ENCODE measurements at regions of chr12 and their contacts with region 1.

Region 1: DNA sequence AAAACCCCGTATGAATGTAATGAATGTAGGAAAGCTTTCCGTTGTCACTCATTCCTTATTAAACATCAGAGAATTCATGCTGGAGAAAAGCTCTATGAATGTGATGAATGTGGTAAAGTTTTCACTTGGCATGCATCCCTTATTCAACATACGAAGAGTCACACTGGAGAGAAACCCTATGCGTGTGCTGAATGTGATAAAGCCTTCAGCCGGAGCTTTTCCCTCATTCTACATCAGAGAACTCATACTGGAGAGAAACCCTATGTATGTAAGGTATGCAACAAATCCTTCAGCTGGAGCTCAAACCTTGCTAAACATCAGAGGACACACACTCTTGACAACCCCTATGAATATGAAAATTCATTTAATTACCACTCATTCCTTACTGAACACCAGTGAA is 23.8 kb downstream of the ZNF891 start:
- DNase-seq: no peak
- ATAC-seq: no peak
- H3K4me3 ChIP-seq: no peak overlapping the region
- H3K27ac ChIP-seq: no peak overlapping the region
- H3K4me1 ChIP-seq: no peaks in the 10 kb centered on the region
- H3K27me3 ChIP-seq: no peaks in the 10 kb centered on the region
- CTCF ChIP-seq: no peak

Region 2: GRCh38 chr12:132776816-132777568 is 329.3 kb before region 1 on chr12:
- intact Hi-C with region 1: no loop called
- DNase-seq: peak; percentile 82
- ATAC-seq: peak; percentile 76 to 94 (median 83)
- H3K4me3 ChIP-seq: no peak overlapping the region
- H3K27ac ChIP-seq: peak overlapping the region in 3 of 10 donors; percentile 4 to 27 (median 26)
- H3K4me1 ChIP-seq: peaks cover 0 to 19% (median 8%) of the 10 kb centered on the region in 9 donors
- H3K27me3 ChIP-seq: no peaks in the 10 kb centered on the region
- CTCF ChIP-seq: no peak

Region 3: GRCh38 chr12:133010657-133011297 is 95.5 kb before region 1 on chr12:
- intact Hi-C with region 1: no loop called
- DNase-seq: no peak
- ATAC-seq: no peak
- H3K4me3 ChIP-seq: no peak overlapping the region
- H3K27ac ChIP-seq: no peak overlapping the region
- H3K4me1 ChIP-seq: no peaks in the 10 kb centered on the region
- H3K27me3 ChIP-seq: no peaks in the 10 kb centered on the region
- CTCF ChIP-seq: no peak

Region 4: GRCh38 chr12:133058203-133059125 is 47.8 kb before region 1 on chr12:
- intact Hi-C with region 1: loop called in 1 of 10 experiments (anchors 5 kb)
- DNase-seq: no peak
- ATAC-seq: no peak
- H3K4me3 ChIP-seq: no peak overlapping the region
- H3K27ac ChIP-seq: no peak overlapping the region
- H3K4me1 ChIP-seq: no peaks in the 10 kb centered on the region
- H3K27me3 ChIP-seq: no peaks in the 10 kb centered on the region
- CTCF ChIP-seq: no peak

Region 5: GRCh38 chr12:133120385-133121191 is 14.3 kb after region 1 on chr12:
- intact Hi-C with region 1: no loop called
- DNase-seq: no peak
- ATAC-seq: no peak
- H3K4me3 ChIP-seq: no peak overlapping the region
- H3K27ac ChIP-seq: no peak overlapping the region
- H3K4me1 ChIP-seq: no peaks in the 10 kb centered on the region
- H3K27me3 ChIP-seq: no peaks in the 10 kb centered on the region
- CTCF ChIP-seq: no peak